CD4-positive, alpha-beta T cell (primary cell): ENCODE measurements at regions of chr17 and their contacts with region 1.

Region 1: GRCh38 chr17:5584383-5585286 is at the start of gene NLRP1:
- DNase-seq: peak; percentile 87 to 98 (median 94)
- ATAC-seq: peak; percentile 92
- H3K4me3 ChIP-seq: peak within 1 kb of the TSS; percentile 90
- H3K4me3 Mint-ChIP-seq: peak within 1 kb of the TSS; percentile 93
- H3K27ac ChIP-seq: peak within 1 kb of the TSS; percentile 84 to 92
- H3K27ac Mint-ChIP-seq: peak within 1 kb of the TSS; percentile 98
- H3K4me1 ChIP-seq: peaks cover 65% of the 10 kb centered on the region
- H3K4me1 Mint-ChIP-seq: peaks cover 74% of the 10 kb centered on the region
- H3K27me3 ChIP-seq: no peaks in the 10 kb centered on the region
- H3K27me3 Mint-ChIP-seq: no peaks in the 10 kb centered on the region
- CTCF ChIP-seq: no peak
- total RNA-seq, gene NLRP1: 254 to 258 TPM

Region 2: DNA sequence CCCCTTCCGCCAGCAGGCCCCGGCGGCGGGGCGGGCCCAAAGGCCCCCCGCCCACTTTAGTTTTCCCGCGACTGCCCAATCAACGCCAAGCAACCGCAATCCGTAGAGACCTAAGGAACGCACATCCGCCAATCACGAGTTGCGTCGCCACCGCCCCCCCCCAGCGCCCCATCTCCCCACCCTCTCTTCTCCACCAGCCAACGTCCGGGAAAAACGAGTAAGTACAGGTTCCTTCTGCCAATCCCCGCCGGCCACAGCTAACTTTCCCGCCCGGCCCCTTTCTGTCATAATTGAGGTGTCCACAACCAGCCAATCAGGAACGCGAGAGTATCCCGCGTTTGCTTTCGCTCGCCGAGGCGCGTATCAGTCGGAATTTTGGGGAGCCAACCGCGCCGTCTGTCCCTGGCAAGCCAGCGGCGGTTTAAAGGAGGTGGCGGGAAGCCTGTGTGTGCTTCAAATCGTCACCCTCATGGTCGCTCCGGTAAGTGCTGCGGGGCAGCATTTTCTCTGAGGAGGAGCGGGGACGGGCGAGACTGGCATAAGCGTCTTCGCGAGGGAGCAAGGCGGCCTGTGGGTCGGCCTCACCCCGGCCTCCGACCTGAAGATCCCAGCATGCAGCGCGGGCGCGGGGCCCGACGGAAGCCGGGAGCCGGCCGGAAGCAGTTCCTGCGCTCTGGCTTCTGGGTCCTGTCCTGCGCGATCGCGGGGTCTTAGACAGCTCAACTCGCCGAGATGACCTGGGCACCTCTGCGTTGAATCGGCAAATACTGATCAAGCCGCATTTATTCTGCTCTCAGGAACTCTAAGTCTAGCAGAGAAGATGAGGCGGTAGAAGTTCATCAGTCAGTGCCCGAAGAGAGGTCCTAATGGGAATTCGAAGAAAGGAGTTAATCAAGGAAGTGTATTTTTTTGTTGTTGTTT is 98.2 kb before region 1 on chr17 and contains the start of gene MIS12:
- CTCF ChIA-PET with region 1: no interaction called
- POLR2A ChIA-PET with region 1: interaction called, 9 read pairs
- intact Hi-C with region 1: loop called in 1 of 2 experiments (anchors 5 kb)
- DNase-seq: peak; percentile 93 to 99 (median 96)
- ATAC-seq: peak; percentile 92
- H3K4me3 ChIP-seq: peak within 1 kb of the TSS; percentile 93
- H3K4me3 Mint-ChIP-seq: peak within 1 kb of the TSS; percentile 92
- H3K27ac ChIP-seq: peak within 1 kb of the TSS; percentile 86 to 100
- H3K27ac Mint-ChIP-seq: peak within 1 kb of the TSS; percentile 96
- H3K4me1 ChIP-seq: peaks cover 27% of the 10 kb centered on the region
- H3K4me1 Mint-ChIP-seq: peaks cover 61% of the 10 kb centered on the region
- H3K27me3 ChIP-seq: no peaks in the 10 kb centered on the region
- H3K27me3 Mint-ChIP-seq: no peaks in the 10 kb centered on the region
- CTCF ChIP-seq: no peak
- total RNA-seq, gene MIS12: 19.2 to 20.3 TPM

Region 3: DNA sequence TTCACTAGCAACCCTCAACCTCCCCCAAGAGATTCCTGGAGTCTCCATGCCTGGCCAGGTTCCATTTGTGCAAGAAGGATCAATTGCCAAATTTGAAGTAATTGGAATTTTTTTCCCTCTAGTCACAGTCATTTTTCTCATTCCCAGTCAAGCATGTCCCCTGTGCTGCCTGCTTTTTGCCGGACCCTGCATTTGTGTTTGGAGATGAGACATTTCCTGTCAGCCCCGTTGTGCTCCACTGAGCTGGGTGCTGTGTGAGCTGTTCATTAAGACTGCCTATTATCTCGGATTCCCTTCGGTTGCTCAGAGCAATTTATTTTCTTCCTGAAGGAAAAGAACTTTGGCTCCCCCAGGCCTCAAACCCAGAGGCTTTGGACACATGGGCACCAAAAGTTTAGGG is 200.7 kb after region 1 on chr17:
- CTCF ChIA-PET with region 1: no interaction called
- POLR2A ChIA-PET with region 1: no interaction called
- intact Hi-C with region 1: no loop called
- DNase-seq: no peak
- ATAC-seq: no peak
- H3K4me3 ChIP-seq: no peak overlapping the region
- H3K4me3 Mint-ChIP-seq: no peak overlapping the region
- H3K27ac ChIP-seq: no peak overlapping the region
- H3K27ac Mint-ChIP-seq: no peak overlapping the region
- H3K4me1 ChIP-seq: no peaks in the 10 kb centered on the region
- H3K4me1 Mint-ChIP-seq: no peaks in the 10 kb centered on the region
- H3K27me3 ChIP-seq: peaks cover 5 to 16% of the 10 kb centered on the region in 2 experiments
- H3K27me3 Mint-ChIP-seq: peaks cover 66% of the 10 kb centered on the region
- CTCF ChIP-seq: no peak

Region 4: DNA sequence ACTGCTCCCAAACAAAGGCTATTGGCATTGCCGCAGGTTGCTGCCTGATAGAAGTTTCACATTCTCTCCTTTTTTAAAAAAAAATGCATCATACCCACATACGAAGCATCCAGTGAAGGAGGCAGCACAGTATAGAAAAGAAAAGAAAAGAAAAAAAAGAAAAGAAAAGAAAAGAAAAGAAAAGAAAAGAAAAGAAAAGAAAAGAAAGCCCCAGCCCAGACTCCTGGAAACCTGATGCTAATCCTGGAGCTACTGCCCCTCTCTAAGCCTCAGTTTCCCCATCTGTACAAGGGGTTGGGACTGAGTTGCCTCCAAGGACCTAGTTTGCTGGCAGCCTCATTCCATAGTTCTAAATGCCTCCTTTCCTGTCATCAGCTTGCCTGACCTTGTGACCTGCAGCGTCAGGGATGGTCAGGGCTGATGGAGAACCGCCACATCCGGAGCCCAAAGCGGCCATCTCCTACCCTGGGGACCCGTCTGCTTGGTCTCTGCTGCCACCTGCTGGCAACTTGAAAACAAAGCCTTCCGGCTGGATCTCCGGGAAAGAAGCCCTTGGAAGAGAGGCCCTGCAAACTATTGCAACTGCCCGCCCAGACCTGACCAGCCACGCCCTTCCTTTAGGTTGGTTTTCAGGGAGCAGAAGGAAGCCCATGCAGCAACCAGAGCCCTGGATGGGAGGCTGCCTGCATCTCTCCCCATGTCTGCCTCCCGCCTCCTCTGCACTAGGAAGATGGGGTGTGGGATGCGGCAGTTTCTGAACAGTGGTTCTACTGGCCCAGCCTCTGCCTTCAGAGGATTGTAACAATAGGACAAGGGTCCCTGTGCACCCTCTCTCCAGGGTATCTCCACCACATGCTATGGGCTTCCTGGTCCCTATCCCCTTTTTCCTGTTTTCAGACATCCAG is 837.3 kb after region 1 on chr17:
- CTCF ChIA-PET with region 1: no interaction called
- POLR2A ChIA-PET with region 1: no interaction called
- intact Hi-C with region 1: loop called (anchors 1 kb)
- DNase-seq: peak; percentile 46 to 83 (median 65)
- ATAC-seq: peak; percentile 62
- H3K4me3 ChIP-seq: no peak overlapping the region
- H3K4me3 Mint-ChIP-seq: no peak overlapping the region
- H3K27ac ChIP-seq: no peak overlapping the region
- H3K27ac Mint-ChIP-seq: no peak overlapping the region
- H3K4me1 ChIP-seq: peaks cover 15% of the 10 kb centered on the region
- H3K4me1 Mint-ChIP-seq: peaks cover 2% of the 10 kb centered on the region
- H3K27me3 ChIP-seq: peaks cover 0 to 5% of the 10 kb centered on the region in 2 experiments
- H3K27me3 Mint-ChIP-seq: peaks cover 36% of the 10 kb centered on the region
- CTCF ChIP-seq: peak; percentile 81

Region 5: GRCh38 chr17:6651357-6651918 is 1066.8 kb after region 1 on chr17 and contains the starts of genes C17orf100 and MED31:
- CTCF ChIA-PET with region 1: no interaction called
- POLR2A ChIA-PET with region 1: no interaction called
- intact Hi-C with region 1: loop called (anchors 5 kb)
- DNase-seq: peak; percentile 87 to 98 (median 94)
- ATAC-seq: peak; percentile 81
- H3K4me3 ChIP-seq: peak within 1 kb of the TSS; percentile 64
- H3K4me3 Mint-ChIP-seq: peak within 1 kb of the TSS; percentile 99
- H3K27ac ChIP-seq: peak within 1 kb of the TSS; percentile 98
- H3K27ac Mint-ChIP-seq: peak within 1 kb of the TSS; percentile 99
- H3K4me1 ChIP-seq: peaks cover 35% of the 10 kb centered on the region
- H3K4me1 Mint-ChIP-seq: peaks cover 73% of the 10 kb centered on the region
- H3K27me3 ChIP-seq: peaks cover 0 to 4% of the 10 kb centered on the region in 2 experiments
- H3K27me3 Mint-ChIP-seq: no peaks in the 10 kb centered on the region
- CTCF ChIP-seq: no peak
- total RNA-seq, gene C17orf100: 0.69 to 0.70 TPM
- total RNA-seq, gene MED31: 31.4 to 32.0 TPM

Region 6: GRCh38 chr17:7004398-7005253 is 1420.0 kb after region 1 on chr17:
- CTCF ChIA-PET with region 1: no interaction called
- POLR2A ChIA-PET with region 1: no interaction called
- intact Hi-C with region 1: loop called in 1 of 2 experiments (anchors 10 kb)
- DNase-seq: peak in 5 of 14 experiments; percentile 19 to 84 (median 81)
- ATAC-seq: peak; percentile 97
- H3K4me3 ChIP-seq: no peak overlapping the region
- H3K4me3 Mint-ChIP-seq: peak overlapping the region; percentile 70
- H3K27ac ChIP-seq: no peak overlapping the region
- H3K27ac Mint-ChIP-seq: peak overlapping the region; percentile 13
- H3K4me1 ChIP-seq: peaks cover 9% of the 10 kb centered on the region
- H3K4me1 Mint-ChIP-seq: peaks cover 20% of the 10 kb centered on the region
- H3K27me3 ChIP-seq: no peaks in the 10 kb centered on the region
- H3K27me3 Mint-ChIP-seq: no peaks in the 10 kb centered on the region
- CTCF ChIP-seq: peak; percentile 81